ENCODE measurements at regions of chr4 and their contacts with region 1.

Region 1: DNA sequence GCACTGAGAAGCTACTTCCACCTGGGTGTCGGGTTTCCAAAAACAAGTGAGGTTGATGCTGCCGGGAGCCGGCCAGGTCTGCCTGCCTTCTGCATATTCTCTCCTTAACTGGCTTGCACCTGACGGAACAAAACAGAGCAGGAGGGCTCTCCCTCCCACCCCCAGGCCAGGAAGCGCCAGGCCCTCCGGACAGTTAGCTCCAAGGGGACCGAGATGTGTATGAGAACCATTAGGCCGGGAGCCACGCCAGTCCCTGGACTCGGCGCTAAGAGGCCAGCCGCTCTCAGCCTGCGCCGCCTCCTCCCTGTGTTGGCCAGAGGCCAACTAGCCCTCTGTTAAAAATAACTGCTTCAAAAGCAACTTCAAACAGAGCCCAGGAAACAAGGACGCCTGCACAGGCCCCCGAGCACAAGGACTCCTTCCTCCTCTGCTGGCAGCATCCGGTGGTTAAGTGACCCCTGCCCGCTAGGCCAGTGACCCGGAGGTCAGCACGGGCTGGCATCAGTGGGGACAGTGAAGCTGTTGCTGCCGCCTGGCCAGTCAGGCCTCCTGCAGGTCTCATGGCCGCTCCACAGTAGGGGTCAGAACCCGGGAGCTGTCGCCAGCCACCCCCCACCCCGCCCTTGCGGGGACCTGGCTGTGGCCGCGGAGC is 107.9 kb downstream of the ABLIM2 start:
- DNase-seq: peak; percentile 83 to 87
- ATAC-seq: peak; percentile 85 to 96 (median 90)
- H3K4me3 ChIP-seq: peak overlapping the region in 5 of 10 donors; percentile 4 to 28 (median 25)
- H3K27ac ChIP-seq: peak overlapping the region; percentile 54 to 91 (median 83)
- H3K4me1 ChIP-seq: peaks cover 5 to 21% (median 13%) of the 10 kb centered on the region in 9 donors
- H3K27me3 ChIP-seq: peaks cover 0 to 4% (median 0%) of the 10 kb centered on the region in 7 donors
- CTCF ChIP-seq: no peak

Region 2: GRCh38 chr4:7973545-7973981 is 77.1 kb before region 1 on chr4:
- intact Hi-C with region 1: no loop called
- DNase-seq: no peak
- ATAC-seq: no peak
- H3K4me3 ChIP-seq: no peak overlapping the region
- H3K27ac ChIP-seq: no peak overlapping the region
- H3K4me1 ChIP-seq: peaks cover 18 to 46% (median 37%) of the 10 kb centered on the region in 9 donors
- H3K27me3 ChIP-seq: no peaks in the 10 kb centered on the region
- CTCF ChIP-seq: no peak

Region 3: GRCh38 chr4:8123389-8123788 is 72.7 kb after region 1 on chr4:
- intact Hi-C with region 1: loop called in 1 of 10 experiments (anchors 10 kb)
- DNase-seq: peak; percentile 45 to 54
- ATAC-seq: peak; percentile 47 to 90 (median 70)
- H3K4me3 ChIP-seq: no peak overlapping the region
- H3K27ac ChIP-seq: peak overlapping the region in 4 of 10 donors; percentile 15 to 58 (median 38)
- H3K4me1 ChIP-seq: peaks cover 2 to 15% (median 8%) of the 10 kb centered on the region in 9 donors
- H3K27me3 ChIP-seq: no peaks in the 10 kb centered on the region
- CTCF ChIP-seq: no peak

Region 4: DNA sequence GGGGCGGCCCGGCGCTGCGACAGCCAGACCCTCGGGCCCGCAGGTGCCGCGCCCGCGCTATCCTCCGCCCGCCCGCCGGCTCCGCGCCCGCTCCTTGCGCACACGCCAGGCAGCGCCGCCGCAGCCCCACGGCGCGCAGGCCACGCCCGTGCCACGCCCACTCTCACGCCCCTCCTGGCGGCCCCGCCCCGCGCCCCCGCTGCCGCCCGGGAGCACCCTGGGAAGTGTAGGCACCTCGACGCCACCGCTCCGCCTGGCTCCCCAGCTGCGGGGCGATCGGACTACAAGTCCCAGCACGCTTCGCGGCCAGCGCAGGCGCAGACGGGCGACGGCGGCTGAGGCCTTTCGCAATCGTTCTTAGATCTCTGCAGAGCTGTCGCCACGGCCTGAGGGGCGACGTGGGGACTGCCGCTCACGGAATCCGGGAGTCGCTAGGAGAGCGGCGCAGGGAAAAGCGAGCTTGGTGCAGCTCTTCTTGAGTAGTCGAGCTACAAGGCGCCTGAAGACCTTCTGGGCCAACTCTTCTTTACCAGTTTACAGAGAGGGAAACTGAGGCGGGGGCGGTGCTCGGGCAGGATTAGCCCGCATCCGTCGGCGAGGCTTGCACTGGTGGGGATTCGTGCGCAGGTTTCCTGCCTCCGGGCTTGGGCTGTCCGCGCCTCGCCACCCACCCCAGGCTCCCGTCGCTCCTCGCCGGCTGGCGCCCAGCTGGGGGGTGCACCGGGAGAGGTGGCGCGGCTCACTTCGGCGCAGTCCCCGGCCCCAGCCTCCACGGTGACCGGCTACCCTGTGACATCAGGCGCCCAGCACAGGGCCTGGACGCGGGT is 108.2 kb after region 1 on chr4 and contains the start of gene ABLIM2:
- intact Hi-C with region 1: loop called in 1 of 10 experiments (anchors 5 kb)
- DNase-seq: peak; percentile 97 to 99
- ATAC-seq: peak; percentile 95 to 99 (median 98)
- H3K4me3 ChIP-seq: peak within 1 kb of the TSS; percentile 59 to 97 (median 90)
- H3K27ac ChIP-seq: peak within 1 kb of the TSS in 9 of 10 donors; percentile 36 to 87 (median 82)
- H3K4me1 ChIP-seq: peaks cover 9 to 35% (median 23%) of the 10 kb centered on the region in 9 donors
- H3K27me3 ChIP-seq: peaks cover 0 to 22% (median 6%) of the 10 kb centered on the region in 7 donors
- CTCF ChIP-seq: peak in 1 of 9 donors; percentile 14
- total RNA-seq, gene ABLIM2: 11.6 to 27.8 (median 17.7) TPM

Measured in heart right ventricle (tissue), 16 donors.